ENCODE measurements at regions of chr7 and their contacts with region 1.

Region 1: DNA sequence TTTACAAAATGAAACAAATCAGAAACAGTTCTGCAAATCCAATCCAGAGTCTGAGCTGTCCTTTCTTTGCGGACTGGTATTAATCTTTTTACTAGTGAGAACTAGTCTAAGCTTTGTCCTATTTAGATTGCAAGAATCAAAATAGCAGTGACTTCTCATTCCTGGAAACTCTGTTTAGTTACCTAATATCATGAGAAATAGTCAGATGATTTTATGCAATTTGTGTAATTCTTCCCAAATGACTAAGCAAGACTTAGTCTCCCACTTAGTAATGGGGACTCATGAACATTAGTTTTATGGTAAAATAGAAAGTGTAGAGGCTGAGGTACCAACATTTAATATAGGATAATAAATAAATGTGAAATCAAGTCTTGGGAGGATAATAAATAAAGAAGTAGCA is 341.3 kb downstream of the DNAJB9 start:
- DNase-seq: no peak
- H3K4me3 ChIP-seq: no peak overlapping the region
- H3K27ac ChIP-seq: no peak overlapping the region
- H3K4me1 ChIP-seq: no peaks in the 10 kb centered on the region
- H3K27me3 ChIP-seq: no peaks in the 10 kb centered on the region
- CTCF ChIP-seq: no peak

Region 2: DNA sequence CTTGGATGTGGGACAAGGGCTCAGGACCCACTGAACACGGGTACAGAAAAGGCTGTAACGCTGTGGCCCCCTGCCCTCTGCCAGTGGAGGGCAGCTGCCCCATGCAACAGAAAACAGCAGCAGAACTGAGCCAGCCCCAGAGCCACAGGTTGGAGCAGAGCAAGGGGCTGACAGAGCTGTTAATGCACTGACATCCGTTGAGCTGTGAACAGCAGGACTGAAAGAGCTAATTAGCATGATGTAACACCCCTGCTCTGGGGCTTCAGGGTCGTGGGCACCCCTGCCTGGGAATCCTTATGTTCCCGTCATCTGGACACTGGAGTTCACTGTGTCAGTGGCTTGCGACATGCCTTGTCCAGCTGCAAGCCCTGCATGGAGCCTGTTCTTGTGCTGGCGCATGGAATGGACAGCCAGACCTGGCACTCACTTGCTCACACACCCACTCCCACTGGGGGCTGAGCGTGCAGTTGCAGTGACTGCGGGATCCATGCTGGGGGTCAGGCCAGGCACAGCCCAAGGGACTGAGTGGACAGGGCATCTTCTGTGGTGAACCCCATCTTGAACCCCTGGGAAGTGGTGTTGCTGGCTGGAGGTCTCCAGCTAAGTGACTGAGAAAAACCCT is 47.7 kb before region 1 on chr7:
- intact Hi-C with region 1: loop called (anchors 10 kb)
- DNase-seq: no peak
- H3K4me3 ChIP-seq: no peak overlapping the region
- H3K27ac ChIP-seq: no peak overlapping the region
- H3K4me1 ChIP-seq: no peaks in the 10 kb centered on the region
- H3K27me3 ChIP-seq: no peaks in the 10 kb centered on the region
- CTCF ChIP-seq: no peak

Region 3: GRCh38 chr7:110090110-110090769 is 1179.2 kb after region 1 on chr7:
- intact Hi-C with region 1: no loop called
- DNase-seq: no peak
- H3K4me3 ChIP-seq: no peak overlapping the region
- H3K27ac ChIP-seq: no peak overlapping the region
- H3K4me1 ChIP-seq: no peaks in the 10 kb centered on the region
- H3K27me3 ChIP-seq: no peaks in the 10 kb centered on the region
- CTCF ChIP-seq: peak; percentile 21